Stomach (tissue), 19 donors: ENCODE measurements at regions of chr15 and their contacts with region 1.

Region 1: DNA sequence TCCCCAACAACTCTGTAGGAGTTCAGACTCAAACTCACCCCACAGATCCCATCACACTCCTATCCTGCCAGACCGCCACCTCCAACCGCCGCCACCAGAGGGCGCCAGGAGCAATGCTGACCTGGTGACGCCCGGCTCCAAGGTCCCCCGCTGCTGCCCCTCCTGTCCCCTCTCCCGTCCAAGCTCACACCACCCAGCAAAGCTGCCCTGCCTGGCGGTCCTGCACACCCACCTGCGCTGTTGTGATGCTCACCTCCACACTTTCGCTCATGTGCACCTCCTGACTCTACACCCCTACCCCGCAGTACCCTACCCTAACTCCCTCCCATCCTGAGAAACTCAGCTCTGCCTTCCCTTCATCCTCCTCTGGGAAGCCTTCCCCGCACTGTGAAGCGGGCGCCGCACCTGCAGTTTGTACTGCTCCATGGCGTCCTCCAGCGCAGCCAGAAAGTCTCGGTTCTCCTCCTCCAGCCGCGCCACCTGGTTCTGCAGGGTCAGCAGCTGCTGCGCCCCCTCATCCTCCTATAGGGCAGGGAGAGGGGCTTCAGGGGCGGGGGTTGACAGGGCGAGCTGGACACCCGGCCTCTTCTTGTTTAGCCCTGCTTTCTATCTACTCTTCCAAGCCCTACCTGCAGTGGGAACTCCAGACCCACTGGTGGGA is 7.9 kb downstream of the KIF7 start:
- DNase-seq: peak; percentile 86 to 88
- H3K4me3 ChIP-seq: no peak overlapping the region
- H3K27ac ChIP-seq: no peak overlapping the region
- H3K4me1 ChIP-seq: peaks cover 0 to 9% (median 7%) of the 10 kb centered on the region in 4 donors
- H3K27me3 ChIP-seq: no peaks in the 10 kb centered on the region
- CTCF ChIP-seq: peak in 5 of 7 experiments; percentile 78 to 86 (median 83)
- EP300 ChIP-seq: no peak
- POLR2A ChIP-seq: no peak

Region 2: DNA sequence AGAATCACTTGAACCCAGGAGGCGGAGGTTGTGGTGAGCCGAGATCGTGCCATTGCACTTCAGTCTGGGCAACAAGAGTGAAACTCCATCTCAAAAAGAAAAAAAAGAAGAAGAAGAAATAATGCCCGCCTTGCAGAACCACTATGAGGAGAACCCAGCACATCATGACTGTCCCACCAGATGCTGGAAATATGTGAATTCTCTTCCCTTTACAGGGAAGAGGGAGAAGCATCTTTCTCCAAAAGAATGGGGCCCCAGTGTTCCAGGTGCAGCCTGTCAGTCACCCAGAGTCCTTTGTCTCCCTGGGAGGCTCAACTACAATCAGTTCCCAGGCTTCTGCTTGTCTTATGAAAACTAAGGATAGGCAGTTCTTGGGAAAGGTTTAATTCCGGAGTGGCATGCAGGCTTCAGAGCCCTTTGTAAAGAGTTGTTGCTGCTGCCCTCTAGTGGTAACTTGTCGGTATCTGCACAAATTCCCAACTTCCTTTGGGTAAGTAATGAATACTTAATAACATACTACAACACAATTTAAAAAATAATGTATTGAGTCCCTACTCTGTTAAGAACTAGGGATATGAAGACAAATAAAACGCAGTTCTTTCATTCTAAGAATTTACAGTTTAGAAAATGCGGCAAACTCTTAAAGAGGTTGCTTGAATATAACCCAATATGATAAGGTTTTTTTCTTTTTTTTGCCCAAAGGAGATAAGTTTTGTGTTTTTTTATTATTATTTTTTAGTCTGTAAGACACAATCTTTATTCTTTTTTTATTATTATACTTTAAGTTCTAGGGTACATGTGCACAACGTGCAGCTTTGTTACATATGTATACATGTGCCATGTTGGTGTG is 90.7 kb before region 1 on chr15:
- intact Hi-C with region 1: no loop called
- DNase-seq: peak in 1 of 2 donors; percentile 85
- H3K4me3 ChIP-seq: no peak overlapping the region
- H3K27ac ChIP-seq: no peak overlapping the region
- H3K4me1 ChIP-seq: no peaks in the 10 kb centered on the region
- H3K27me3 ChIP-seq: peaks cover 0 to 47% (median 4%) of the 10 kb centered on the region in 3 donors
- CTCF ChIP-seq: peak in 5 of 7 experiments; percentile 15 to 76 (median 61)
- EP300 ChIP-seq: no peak
- POLR2A ChIP-seq: no peak

Region 3: GRCh38 chr15:89740137-89740536 is 92.8 kb after region 1 on chr15:
- intact Hi-C with region 1: loop called (anchors 10 kb)
- DNase-seq: peak; percentile 48 to 90
- H3K4me3 ChIP-seq: no peak overlapping the region
- H3K27ac ChIP-seq: no peak overlapping the region
- H3K4me1 ChIP-seq: peaks cover 0 to 7% (median 0%) of the 10 kb centered on the region in 4 donors
- H3K27me3 ChIP-seq: peaks cover 0 to 19% (median 0%) of the 10 kb centered on the region in 3 donors
- CTCF ChIP-seq: peak in 6 of 7 experiments; percentile 76 to 97 (median 94)
- EP300 ChIP-seq: no peak
- POLR2A ChIP-seq: no peak